ENCODE measurements at regions of chr12 and their contacts with region 1.

Region 1: GRCh38 chr12:32377344-32378055 is 21.9 kb upstream of the FGD4 start:
- DNase-seq: no peak
- ATAC-seq: no peak
- H3K4me3 ChIP-seq: no peak overlapping the region
- H3K27ac ChIP-seq: no peak overlapping the region
- H3K4me1 ChIP-seq: no peaks in the 10 kb centered on the region
- CTCF ChIP-seq: no peak
- EP300 ChIP-seq: no peak
- POLR2A ChIP-seq: no peak
- RAD21 ChIP-seq: no peak

Region 2: DNA sequence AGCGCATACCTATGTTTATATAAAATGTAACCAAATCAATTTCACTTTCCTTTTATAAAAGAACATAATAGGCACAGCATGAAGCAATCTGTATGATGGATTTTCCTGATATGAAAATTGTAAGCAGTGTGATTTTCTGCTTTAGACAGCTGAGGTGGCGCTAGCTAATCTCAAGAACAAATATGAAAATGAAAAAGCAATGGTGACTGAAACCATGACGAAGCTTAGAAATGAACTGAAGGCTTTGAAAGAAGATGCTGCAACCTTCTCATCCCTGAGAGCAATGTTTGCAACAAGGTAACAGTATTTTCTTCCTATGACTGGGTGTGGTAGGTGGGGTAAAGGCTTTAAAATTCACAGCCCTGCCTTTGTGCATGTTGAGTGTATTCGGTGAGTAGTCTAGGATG is 43.1 kb before region 1 on chr12:
- CTCF ChIA-PET with region 1: no interaction called
- POLR2A ChIA-PET with region 1: no interaction called
- DNase-seq: no peak
- ATAC-seq: no peak
- H3K4me3 ChIP-seq: no peak overlapping the region
- H3K27ac ChIP-seq: no peak overlapping the region
- H3K4me1 ChIP-seq: peaks cover 12% of the 10 kb centered on the region; the same call in 2 of the 3 replicates
- CTCF ChIP-seq: no peak
- EP300 ChIP-seq: no peak
- POLR2A ChIP-seq: no peak
- RAD21 ChIP-seq: no peak

Region 3: GRCh38 chr12:32671930-32672780 is 294.7 kb after region 1 on chr12:
- CTCF ChIA-PET with region 1: interaction called, 10 read pairs
- POLR2A ChIA-PET with region 1: no interaction called
- DNase-seq: peak; percentile 61 to 73
- ATAC-seq: peak; percentile 87 to 90
- H3K4me3 ChIP-seq: no peak overlapping the region
- H3K27ac ChIP-seq: no peak overlapping the region
- H3K4me1 ChIP-seq: no peaks in the 10 kb centered on the region
- CTCF ChIP-seq: peak; percentile 80
- EP300 ChIP-seq: no peak
- POLR2A ChIP-seq: no peak
- RAD21 ChIP-seq: peak; percentile 90 to 93

Measured in A549 (cell line).